Panc1 (cell line): ENCODE measurements at regions of chr5 and their contacts with region 1.

Region 1: DNA sequence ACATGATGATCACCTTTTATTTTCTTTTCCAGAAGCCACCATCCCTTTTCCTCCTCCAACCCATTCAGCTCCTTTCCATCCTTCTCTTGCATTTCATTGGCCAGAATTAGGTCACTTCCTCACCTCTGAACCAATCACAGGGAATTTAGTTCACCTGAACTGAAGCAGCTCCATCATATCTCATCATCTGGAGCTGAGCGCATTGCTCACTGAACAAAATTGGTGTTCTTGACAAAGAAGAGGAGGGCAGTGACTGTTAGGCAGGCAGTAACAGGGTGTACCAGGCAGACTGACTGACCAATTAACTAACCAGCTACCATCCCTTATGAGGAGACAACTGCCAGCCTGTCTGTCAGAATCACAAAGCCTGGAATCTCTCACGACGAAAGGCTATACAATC is 1.8 kb upstream of the ZNF354A start:
- DNase-seq: no peak
- ATAC-seq: no peak
- H3K4me3 ChIP-seq: no peak overlapping the region
- H3K27ac ChIP-seq: no peak overlapping the region
- H3K4me1 ChIP-seq: no peaks in the 10 kb centered on the region
- H3K27me3 ChIP-seq: no peaks in the 10 kb centered on the region
- CTCF ChIP-seq: no peak

Region 2: DNA sequence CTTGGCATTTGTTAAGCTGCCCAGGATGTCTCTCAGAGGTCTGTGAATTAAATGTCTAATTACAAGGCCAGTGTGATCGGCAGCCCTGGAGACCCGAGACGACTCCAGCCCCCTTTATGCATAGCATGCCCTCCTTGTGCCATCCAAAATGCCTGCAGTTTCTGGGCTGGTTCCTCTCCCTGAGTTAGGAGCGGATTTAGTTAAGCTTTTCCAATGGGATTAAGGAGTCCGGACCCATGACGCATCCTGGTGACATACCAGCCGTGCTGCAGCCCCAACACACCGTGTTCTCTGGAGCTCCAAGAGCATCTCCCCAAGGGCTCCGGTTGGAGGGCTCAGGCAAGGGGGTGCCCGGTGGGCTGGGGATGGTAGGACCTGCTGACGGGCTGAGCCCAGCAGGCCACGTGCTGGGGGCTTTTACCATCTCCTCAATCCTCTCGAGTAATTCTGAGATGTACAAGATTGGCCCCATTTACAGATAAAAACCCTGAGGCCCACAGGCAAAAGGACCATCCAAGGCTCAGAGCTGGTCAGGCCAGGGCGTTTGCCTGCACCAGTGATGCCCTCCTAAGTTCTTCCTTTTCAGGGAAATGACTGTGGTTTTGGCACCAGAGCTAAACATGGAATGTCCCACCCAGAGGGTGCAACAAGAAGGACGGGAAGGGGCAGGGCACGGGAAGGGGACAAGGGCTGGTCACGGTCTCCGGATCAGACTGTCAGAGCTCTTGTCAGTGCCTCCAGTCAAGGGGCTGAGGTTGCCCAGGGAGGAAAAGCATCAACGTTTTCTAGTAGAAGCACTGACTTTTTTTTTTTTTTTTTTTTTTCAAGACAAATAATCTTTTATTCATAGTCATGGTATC is 417.1 kb before region 1 on chr5:
- CTCF ChIA-PET with region 1: interaction called, 22 read pairs
- POLR2A ChIA-PET with region 1: no interaction called
- in situ Hi-C with region 1: no loop called
- intact Hi-C with region 1: no loop called
- DNase-seq: no peak
- ATAC-seq: no peak
- H3K4me3 ChIP-seq: no peak overlapping the region
- H3K27ac ChIP-seq: no peak overlapping the region
- H3K4me1 ChIP-seq: no peaks in the 10 kb centered on the region
- H3K27me3 ChIP-seq: peaks cover 10% of the 10 kb centered on the region
- CTCF ChIP-seq: no peak

Region 3: DNA sequence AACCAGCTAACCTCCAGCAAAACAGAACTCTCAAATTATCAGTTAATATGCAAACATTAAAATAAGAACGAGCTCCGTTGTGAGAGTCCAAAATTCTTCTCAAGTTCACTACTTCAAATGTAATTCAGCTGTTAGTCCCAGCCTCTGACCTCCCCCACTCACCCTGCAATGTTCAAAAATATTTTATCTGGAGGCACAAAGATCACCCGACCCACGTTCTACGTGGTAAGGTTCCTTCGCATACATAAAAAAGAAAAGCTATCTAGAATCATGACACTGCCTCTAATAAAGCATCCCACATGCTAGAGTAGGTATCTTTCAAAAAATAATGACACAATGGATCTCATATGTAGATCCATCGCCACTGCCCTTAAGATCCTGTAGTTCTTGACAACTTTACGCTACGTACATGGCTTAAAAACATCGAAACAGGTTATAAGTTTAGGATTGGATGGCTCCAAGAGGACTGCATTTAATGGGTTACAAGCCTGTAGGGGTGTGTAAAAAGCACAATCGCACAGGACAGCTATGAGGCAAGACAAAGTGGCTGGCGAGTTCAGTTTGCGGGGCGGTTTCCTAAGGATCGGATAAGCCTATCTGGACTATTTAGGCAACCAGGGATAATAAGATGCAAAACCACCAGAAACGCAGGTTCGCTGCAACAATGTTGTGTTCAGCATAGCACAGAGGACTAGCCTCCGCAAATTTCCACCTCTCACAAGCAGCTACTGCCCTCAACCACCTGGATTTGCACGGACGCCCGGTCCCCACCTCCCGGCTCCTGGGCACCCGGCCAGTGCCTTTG is 106.4 kb before region 1 on chr5:
- CTCF ChIA-PET with region 1: no interaction called
- POLR2A ChIA-PET with region 1: interaction called, 10 read pairs
- in situ Hi-C with region 1: no loop called
- intact Hi-C with region 1: no loop called
- DNase-seq: no peak
- ATAC-seq: peak; percentile 45
- H3K4me3 ChIP-seq: peak overlapping the region; percentile 91 to 99
- H3K27ac ChIP-seq: peak overlapping the region; percentile 94
- H3K4me1 ChIP-seq: peaks cover 20% of the 10 kb centered on the region
- H3K27me3 ChIP-seq: no peaks in the 10 kb centered on the region
- CTCF ChIP-seq: no peak

Region 4: DNA sequence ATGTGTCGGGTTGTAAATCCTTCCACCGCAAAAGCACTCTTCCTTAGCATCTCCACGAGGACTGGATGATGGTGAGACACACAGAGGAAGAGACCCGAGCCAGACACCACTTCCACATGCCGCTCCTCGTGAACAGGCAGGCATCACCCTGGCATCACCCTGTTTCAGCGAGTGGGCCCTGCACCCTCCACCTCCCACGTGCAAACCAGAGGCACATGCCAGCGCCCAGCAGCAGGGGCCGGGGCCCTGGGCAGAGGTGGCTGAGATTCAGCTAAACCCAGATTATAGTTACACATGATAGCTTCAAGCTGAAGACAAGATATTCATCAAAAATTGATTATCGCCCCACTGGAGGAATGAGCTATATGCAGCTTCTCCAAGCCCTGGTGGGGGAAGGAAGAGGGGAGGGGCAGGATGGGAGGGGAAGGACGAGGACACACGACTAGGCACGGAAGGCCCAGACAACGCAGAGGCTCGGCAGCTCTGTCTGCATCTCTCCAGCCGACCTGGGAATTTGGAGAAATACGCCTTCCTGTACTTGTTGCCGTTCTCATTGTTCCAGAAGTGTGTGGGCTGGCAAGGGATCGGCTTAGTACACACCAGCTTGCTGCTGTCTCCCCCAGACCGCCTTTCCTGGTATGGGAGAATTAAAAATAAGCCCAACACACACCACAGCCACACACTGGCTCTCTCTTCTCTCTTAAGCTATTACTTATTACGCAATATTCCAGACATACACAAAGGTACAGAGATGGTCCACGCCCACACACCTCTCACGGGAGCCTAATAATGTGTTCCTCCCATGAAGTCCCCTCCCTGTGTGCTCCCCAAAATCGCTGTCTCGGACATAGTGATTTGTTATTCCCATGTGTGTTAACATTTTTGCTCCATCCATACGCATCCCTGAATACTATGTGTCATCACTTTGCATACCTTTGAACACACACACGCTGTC is 48.6 kb after region 1 on chr5:
- CTCF ChIA-PET with region 1: no interaction called
- POLR2A ChIA-PET with region 1: no interaction called
- in situ Hi-C with region 1: no loop called
- intact Hi-C with region 1: loop called (anchors 5 kb)
- DNase-seq: no peak
- ATAC-seq: no peak
- H3K4me3 ChIP-seq: no peak overlapping the region
- H3K27ac ChIP-seq: no peak overlapping the region
- H3K4me1 ChIP-seq: peaks cover 9% of the 10 kb centered on the region
- H3K27me3 ChIP-seq: no peaks in the 10 kb centered on the region
- CTCF ChIP-seq: no peak

Region 5: GRCh38 chr5:178838695-178839685 is 106.7 kb after region 1 on chr5:
- CTCF ChIA-PET with region 1: no interaction called
- POLR2A ChIA-PET with region 1: no interaction called
- in situ Hi-C with region 1: no loop called
- intact Hi-C with region 1: loop called (anchors 5 kb)
- DNase-seq: no peak
- ATAC-seq: peak; percentile 89
- H3K4me3 ChIP-seq: no peak overlapping the region
- H3K27ac ChIP-seq: no peak overlapping the region
- H3K4me1 ChIP-seq: no peaks in the 10 kb centered on the region
- H3K27me3 ChIP-seq: no peaks in the 10 kb centered on the region
- CTCF ChIP-seq: peak; percentile 69

Region 6: GRCh38 chr5:178869577-178869976 is 137.3 kb after region 1 on chr5:
- CTCF ChIA-PET with region 1: no interaction called
- POLR2A ChIA-PET with region 1: no interaction called
- in situ Hi-C with region 1: loop called (anchors 5 kb)
- intact Hi-C with region 1: no loop called
- DNase-seq: no peak
- ATAC-seq: no peak
- H3K4me3 ChIP-seq: no peak overlapping the region
- H3K27ac ChIP-seq: no peak overlapping the region
- H3K4me1 ChIP-seq: no peaks in the 10 kb centered on the region
- H3K27me3 ChIP-seq: no peaks in the 10 kb centered on the region
- CTCF ChIP-seq: no peak